Psoas muscle (tissue), 8 donors: ENCODE measurements at regions of chr20 and their contacts with region 1.

Region 1: DNA sequence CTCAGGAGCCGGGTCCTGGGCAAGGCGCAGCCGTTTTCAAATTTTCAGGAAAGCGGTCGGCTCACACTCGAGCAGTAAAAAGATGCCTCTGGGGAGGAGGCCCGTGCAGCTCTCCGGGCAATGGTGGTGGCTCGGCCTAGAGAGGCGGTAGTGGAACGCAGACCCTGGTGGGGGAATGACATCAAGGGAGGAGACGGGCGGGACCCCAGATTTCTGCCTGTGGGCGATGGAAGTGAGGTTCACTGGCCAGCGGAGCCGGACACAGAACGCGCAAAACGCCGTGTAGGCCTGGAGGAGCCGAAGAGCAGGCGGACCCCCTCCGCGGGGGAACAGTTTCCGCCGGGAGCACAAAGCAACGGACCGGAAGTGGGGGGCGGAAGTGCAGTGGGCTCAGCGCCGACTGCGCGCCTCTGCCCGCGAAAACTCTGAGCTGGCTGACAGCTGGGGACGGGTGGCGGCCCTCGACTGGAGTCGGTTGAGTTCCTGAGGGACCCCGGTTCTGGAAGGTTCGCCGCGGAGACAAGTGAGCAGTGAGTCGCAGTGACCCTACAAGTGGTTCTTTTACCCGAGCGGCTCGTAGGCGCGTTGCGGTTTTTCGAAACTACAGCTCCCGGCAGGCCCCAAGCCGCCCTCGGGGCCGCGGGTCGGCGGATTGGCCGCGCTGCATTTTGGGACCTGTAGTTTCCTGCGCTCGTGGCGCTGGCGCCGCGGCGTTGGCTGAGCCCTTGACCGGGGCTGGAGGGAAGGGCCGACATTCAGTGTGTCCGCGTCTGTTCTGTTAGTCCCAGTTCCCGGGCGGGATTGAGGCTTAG is at the start of gene RTEL1:
- DNase-seq: peak; percentile 94 to 96
- ATAC-seq: peak; percentile 93 to 95 (median 94)
- H3K4me3 ChIP-seq: peak within 1 kb of the TSS; percentile 81
- H3K27ac ChIP-seq: peak within 1 kb of the TSS; percentile 93
- H3K4me1 ChIP-seq: peaks cover 11% of the 10 kb centered on the region
- H3K27me3 ChIP-seq: peaks cover 0 to 6% (median 3%) of the 10 kb centered on the region in 3 donors
- CTCF ChIP-seq: no peak
- total RNA-seq, gene RTEL1: 9.2 to 17.5 (median 10.9) TPM

Region 2: DNA sequence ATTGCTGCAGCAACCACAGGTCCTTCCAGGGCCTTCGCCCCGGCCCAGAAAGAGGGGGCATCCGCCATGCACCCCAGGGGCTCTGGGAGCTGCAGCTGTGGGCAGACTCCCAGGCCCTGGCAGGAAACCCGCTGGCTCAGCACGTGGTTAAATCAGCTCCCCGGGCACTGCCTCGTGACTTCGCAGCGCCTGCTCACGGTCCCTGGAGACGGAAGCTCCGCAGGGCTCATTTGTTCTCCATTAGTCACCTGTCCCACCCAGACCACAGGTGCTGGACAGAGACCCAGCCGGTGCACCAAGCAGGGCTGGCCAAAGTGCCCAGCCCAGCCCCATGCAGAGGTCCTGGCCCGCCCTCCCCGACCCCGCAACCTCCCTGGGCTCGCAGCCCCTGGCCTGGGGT is 200.4 kb before region 1 on chr20:
- intact Hi-C with region 1: no loop called
- DNase-seq: no peak
- ATAC-seq: peak; percentile 29 to 55 (median 39)
- H3K4me3 ChIP-seq: no peak overlapping the region
- H3K27ac ChIP-seq: no peak overlapping the region
- H3K4me1 ChIP-seq: no peaks in the 10 kb centered on the region
- H3K27me3 ChIP-seq: peaks cover 0 to 87% (median 25%) of the 10 kb centered on the region in 3 donors
- CTCF ChIP-seq: no peak

Region 3: DNA sequence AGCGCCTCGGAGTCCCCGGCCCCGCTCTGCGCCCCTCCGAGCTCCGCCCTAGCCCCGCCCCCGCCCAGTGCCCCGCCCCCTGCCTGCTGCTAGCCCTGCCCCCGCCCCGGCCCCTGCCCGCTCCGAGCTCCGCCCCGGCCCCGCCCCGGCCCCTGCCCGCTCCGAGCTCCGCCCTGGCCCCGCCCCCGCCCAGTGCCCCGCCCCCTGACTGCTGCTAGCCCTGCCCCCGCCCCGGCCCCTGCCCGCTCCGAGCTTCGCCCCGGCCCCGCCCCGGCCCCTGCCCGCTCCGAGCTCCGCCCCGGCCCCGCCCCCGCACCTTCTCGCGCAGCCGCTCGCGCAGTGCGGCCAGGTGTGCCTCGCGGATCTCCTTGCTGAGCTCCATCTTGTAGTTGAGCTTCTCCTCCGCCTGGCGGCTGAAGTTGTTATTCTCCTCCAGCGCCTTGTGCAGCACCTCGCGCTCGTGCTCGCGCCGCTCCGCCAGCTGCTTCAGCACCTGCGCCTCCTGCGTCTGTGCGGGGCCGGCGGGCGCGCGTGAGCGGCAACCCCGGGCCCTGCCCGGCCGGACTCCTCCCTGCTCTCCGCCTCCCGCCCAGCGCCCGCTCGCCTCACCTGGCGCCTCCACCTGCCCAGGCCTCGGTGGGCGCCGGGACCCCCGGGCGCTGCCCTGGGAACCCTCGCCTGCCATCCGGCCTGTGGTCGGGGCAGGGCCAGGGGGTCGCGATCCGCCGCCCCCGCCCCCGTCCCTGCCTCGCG is 16.2 kb before region 1 on chr20:
- intact Hi-C with region 1: loop called in 1 of 2 experiments (anchors 2 kb)
- DNase-seq: peak; percentile 86 to 94
- ATAC-seq: peak; percentile 91 to 93 (median 92)
- H3K4me3 ChIP-seq: peak overlapping the region; percentile 76
- H3K27ac ChIP-seq: peak overlapping the region; percentile 63
- H3K4me1 ChIP-seq: peaks cover 2% of the 10 kb centered on the region
- H3K27me3 ChIP-seq: peaks cover 0 to 4% (median 0%) of the 10 kb centered on the region in 3 donors
- CTCF ChIP-seq: peak; percentile 46

Region 4: GRCh38 chr20:63707549-63708300 is 49.6 kb after region 1 on chr20 and contains the starts of genes ARFRP1 and ZGPAT:
- intact Hi-C with region 1: loop called (anchors 2 to 5 kb)
- DNase-seq: peak; percentile 93 to 95
- ATAC-seq: peak; percentile 96 to 98 (median 96)
- H3K4me3 ChIP-seq: peak within 1 kb of the TSS; percentile 97
- H3K27ac ChIP-seq: peak within 1 kb of the TSS; percentile 92
- H3K4me1 ChIP-seq: peaks cover 16% of the 10 kb centered on the region
- H3K27me3 ChIP-seq: no peaks in the 10 kb centered on the region
- CTCF ChIP-seq: no peak
- total RNA-seq, gene ARFRP1: 22.9 to 38.9 (median 32.6) TPM
- total RNA-seq, gene ZGPAT: 10.7 to 18.2 (median 14.9) TPM